Left ventricle myocardium inferior (tissue), 1 donor: ENCODE measurements at regions of chr4 and their contacts with region 1.

Region 1: GRCh38 chr4:53932796-53933610 is 131.4 kb downstream of the CHIC2 start:
- DNase-seq: no peak
- H3K4me3 ChIP-seq: no peak overlapping the region
- H3K27ac ChIP-seq: no peak overlapping the region
- H3K4me1 ChIP-seq: peaks cover 7% of the 10 kb centered on the region
- H3K27me3 ChIP-seq: peaks cover 14% of the 10 kb centered on the region
- CTCF ChIP-seq: no peak

Region 2: DNA sequence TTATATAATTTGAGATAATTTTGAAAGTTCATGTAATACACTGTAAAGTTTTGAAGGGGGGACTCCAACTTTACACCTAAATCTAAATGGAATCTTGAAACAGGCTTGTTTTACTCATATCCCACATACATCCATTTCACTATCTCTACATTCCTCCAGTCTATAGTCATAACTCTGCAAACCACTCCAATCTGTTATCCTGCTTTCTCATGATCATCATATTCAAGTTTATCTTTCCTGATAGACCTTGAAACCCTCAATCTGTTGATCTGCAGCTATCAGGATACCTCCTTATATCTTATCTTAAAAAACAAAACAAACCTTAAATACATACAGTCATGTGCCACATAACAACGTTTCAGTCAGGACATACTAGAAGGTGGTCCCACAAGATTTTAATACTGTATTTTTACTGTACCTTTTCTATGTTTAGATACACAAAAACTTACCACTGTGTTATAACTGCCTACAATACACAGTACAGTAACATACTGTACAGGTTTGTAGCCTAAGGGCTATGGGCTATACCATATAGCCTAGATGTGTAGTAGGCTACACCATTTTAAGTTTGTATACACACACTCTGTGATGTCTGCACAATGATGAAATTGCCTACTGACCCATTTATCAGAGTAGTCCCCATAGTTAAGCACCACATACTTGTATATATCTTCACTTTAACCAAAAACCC is 117.4 kb after region 1 on chr4:
- intact Hi-C with region 1: no loop called
- DNase-seq: no peak
- H3K4me3 ChIP-seq: no peak overlapping the region
- H3K27ac ChIP-seq: no peak overlapping the region
- H3K4me1 ChIP-seq: peaks cover 46% of the 10 kb centered on the region
- H3K27me3 ChIP-seq: no peaks in the 10 kb centered on the region
- CTCF ChIP-seq: no peak

Region 3: GRCh38 chr4:54213761-54214160 is 280.8 kb after region 1 on chr4:
- intact Hi-C with region 1: loop called (anchors 2 kb)
- DNase-seq: no peak
- H3K4me3 ChIP-seq: no peak overlapping the region
- H3K27ac ChIP-seq: peak overlapping the region; percentile 74
- H3K4me1 ChIP-seq: peaks cover 13% of the 10 kb centered on the region
- H3K27me3 ChIP-seq: peaks cover 29% of the 10 kb centered on the region
- CTCF ChIP-seq: no peak